ENCODE measurements at regions of chr20 and their contacts with region 1.

Region 1: DNA sequence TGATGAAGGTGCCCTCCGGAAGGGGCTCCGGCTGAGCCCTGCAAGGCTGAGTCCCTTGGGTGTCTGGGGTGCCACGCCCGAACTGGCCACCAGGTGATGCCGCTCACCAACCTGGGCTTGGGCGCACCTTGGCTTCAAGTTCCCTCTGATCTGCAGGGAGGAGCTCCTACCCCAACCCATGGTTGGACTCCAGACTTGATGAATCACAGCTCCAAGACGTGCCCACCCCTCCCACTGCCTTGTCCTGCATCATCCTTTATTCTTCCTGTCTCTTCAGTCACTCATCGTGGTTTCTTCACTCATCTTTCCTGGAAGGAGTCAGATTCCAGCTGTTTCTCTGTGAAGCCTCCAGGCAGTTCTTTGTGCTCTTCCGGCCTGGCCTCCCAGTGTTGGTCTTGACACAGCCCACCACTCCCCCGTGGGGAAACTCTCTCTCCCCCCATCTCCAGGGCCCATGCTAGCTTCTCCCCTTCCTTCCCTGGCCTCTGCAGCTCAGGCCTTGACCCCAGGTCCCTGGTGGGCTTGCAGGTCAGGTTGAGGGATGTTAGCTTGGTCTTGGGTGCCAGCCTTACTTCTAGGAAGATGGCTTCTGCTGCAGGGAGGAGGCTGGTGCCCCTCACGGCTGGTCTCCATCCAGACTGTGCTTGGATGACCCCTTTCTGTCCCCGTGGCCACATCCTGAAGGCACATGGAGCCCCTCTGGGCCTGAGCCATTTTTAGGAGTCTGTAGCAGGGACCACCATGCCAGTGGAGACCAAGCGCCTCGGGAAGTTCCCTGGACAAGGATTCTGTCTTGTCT is 2.6 kb upstream of the ZBP1 start:
- DNase-seq: peak; percentile 88
- H3K4me3 Mint-ChIP-seq: no peak overlapping the region
- H3K27ac Mint-ChIP-seq: no peak overlapping the region
- H3K4me1 Mint-ChIP-seq: peaks cover 71% of the 10 kb centered on the region
- H3K27me3 Mint-ChIP-seq: no peaks in the 10 kb centered on the region

Region 2: DNA sequence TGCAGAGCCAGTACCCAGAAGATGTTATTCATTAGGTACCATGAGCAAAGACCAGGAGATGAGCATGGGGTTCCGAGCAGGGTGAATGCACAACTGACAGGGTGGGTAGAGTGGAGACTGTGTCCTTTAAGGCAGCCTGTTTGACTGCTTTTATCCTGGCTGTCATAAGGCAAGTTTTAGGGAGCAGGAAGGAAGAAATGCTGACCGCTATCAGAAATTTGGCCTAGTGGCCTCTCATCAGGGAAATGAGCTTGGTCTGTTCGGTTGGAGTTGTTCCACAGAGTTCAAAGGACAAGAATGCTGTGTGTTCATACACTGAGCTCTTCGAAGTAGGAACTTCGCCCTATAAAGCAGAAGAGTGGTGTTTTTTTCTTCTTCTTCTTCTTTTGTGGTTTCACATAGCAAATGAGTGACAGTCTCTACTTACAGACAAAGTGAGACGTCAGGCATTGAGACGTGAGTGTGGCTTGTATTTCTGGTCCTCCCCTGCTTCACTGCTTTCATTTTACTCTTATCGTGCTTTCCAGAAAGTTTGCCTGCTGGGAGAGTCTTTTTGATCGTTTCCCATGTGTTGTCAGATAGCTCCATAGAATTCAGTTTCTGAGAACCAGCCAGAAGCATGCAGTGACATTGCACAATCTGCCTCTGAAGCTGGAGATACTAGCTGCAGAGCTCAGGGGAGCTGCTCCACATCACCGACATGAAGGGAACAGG is 1210.9 kb before region 1 on chr20 and contains the start of gene CASS4:
- CTCF ChIA-PET with region 1: no interaction called
- intact Hi-C with region 1: loop called (anchors 10 kb)
- DNase-seq: peak; percentile 63
- H3K4me3 Mint-ChIP-seq: peak within 1 kb of the TSS; percentile 89
- H3K27ac Mint-ChIP-seq: peak within 1 kb of the TSS; percentile 98
- H3K4me1 Mint-ChIP-seq: peaks cover 62% of the 10 kb centered on the region
- H3K27me3 Mint-ChIP-seq: no peaks in the 10 kb centered on the region
- total RNA-seq, gene CASS4: 5.1 to 5.2 TPM

Region 3: GRCh38 chr20:57089691-57090150 is 533.1 kb before region 1 on chr20:
- CTCF ChIA-PET with region 1: no interaction called
- intact Hi-C with region 1: no loop called
- DNase-seq: peak; percentile 82
- H3K4me3 Mint-ChIP-seq: no peak overlapping the region
- H3K27ac Mint-ChIP-seq: no peak overlapping the region
- H3K4me1 Mint-ChIP-seq: peaks cover 11% of the 10 kb centered on the region
- H3K27me3 Mint-ChIP-seq: peaks cover 9% of the 10 kb centered on the region

Region 4: DNA sequence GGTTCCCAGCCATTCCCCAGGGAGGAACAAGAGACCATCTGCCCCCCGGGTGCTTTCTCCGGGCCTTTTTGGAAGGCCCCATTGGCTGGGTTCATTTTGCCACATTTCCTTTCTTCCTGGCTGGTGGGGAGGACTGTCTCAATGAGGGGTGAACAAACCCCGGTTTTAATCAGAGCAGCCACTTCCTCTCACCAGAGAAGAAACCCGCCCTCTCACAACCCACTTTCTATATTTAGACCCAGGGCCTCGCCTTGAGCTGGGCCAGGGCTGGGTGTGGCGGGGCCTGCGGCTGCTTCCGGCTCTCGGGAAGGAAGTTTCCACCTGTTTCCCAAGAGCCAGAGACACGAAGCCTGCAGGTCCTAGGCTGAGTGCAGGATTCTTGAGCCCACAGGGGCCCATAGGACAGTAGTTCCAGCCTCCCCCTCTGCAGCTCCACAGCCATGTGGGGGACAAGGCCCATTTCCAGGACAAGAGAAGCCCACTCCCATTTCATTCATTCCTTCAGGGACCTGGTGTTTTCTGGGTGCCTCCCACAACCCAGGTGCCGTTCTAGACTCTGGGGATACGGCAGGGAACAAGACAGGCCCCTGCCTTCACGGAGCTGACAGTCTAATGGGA is 189.8 kb before region 1 on chr20:
- CTCF ChIA-PET with region 1: no interaction called
- intact Hi-C with region 1: loop called (anchors 2 kb)
- DNase-seq: peak; percentile 85
- H3K4me3 Mint-ChIP-seq: peak overlapping the region; percentile 18
- H3K27ac Mint-ChIP-seq: peak overlapping the region; percentile 87
- H3K4me1 Mint-ChIP-seq: peaks cover 58% of the 10 kb centered on the region
- H3K27me3 Mint-ChIP-seq: no peaks in the 10 kb centered on the region

Region 5: DNA sequence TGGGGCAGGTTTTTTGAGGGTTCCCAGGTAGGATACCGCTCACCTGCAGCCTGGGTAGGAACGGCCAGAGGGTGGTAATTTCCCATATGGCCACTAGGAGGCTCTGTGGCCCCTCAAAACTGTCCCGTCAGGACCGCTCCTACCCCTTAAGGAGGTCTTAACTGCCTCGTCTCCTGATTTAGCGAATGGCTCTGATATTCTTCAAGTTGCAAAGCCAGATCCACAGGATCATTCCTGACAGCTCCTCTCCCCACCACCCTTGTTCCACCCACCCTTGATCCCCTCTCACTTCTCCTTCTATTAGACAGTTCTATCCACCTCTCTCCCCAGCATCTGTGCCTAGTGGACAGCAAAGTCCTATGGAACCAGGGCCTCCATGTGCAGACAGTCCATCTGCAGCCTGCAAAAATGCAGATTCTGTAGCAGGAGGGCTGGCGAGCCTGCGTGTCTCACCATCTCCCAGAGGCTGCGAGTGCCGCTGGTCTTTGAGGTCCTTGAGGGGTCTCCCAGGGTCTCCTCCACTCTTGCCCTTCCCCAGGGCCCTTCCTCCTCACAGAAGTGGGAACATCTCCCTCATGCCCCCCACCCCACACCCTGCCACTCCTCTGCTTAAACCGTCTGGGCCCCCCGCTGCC is 31.7 kb after region 1 on chr20:
- CTCF ChIA-PET with region 1: interaction called, 10 read pairs
- intact Hi-C with region 1: loop called (anchors 1 kb)
- DNase-seq: peak; percentile 73
- H3K4me3 Mint-ChIP-seq: no peak overlapping the region
- H3K27ac Mint-ChIP-seq: no peak overlapping the region
- H3K4me1 Mint-ChIP-seq: peaks cover 18% of the 10 kb centered on the region
- H3K27me3 Mint-ChIP-seq: no peaks in the 10 kb centered on the region

Region 6: GRCh38 chr20:57672159-57672558 is 49.4 kb after region 1 on chr20:
- CTCF ChIA-PET with region 1: no interaction called
- intact Hi-C with region 1: no loop called
- DNase-seq: peak; percentile 15
- H3K4me3 Mint-ChIP-seq: no peak overlapping the region
- H3K27ac Mint-ChIP-seq: no peak overlapping the region
- H3K4me1 Mint-ChIP-seq: no peaks in the 10 kb centered on the region
- H3K27me3 Mint-ChIP-seq: no peaks in the 10 kb centered on the region

Region 7: GRCh38 chr20:57709931-57710799 is 87.4 kb after region 1 on chr20 and contains the start of gene PMEPA1:
- CTCF ChIA-PET with region 1: interaction called, 3 read pairs
- intact Hi-C with region 1: loop called (anchors 1 kb)
- DNase-seq: peak; percentile 91
- H3K4me3 Mint-ChIP-seq: peak within 1 kb of the TSS; percentile 79
- H3K27ac Mint-ChIP-seq: peak within 1 kb of the TSS; percentile 68
- H3K4me1 Mint-ChIP-seq: peaks cover 17% of the 10 kb centered on the region
- H3K27me3 Mint-ChIP-seq: peaks cover 6% of the 10 kb centered on the region
- total RNA-seq, gene PMEPA1: 2.0 to 2.2 TPM

Region 8: DNA sequence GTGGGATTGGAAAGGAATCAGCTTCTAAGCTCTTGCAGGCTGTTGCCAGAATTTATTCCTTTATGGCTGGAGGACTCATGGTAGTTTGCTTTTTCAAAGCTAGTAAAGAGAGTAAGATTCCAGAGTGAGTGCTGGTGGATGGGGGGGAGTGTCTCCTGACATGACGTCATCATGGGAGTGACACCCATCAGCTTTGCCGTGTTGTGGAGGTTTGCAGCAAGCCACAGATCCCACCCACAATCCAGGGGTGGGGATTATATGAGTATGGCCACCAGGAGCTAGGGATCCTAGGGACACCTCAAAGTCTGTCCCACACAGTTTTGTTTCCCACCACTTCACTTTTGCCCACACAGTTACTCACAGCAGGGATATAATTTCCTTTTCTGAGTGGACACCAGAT is 115.7 kb after region 1 on chr20:
- CTCF ChIA-PET with region 1: no interaction called
- intact Hi-C with region 1: no loop called
- DNase-seq: no peak
- H3K4me3 Mint-ChIP-seq: no peak overlapping the region
- H3K27ac Mint-ChIP-seq: no peak overlapping the region
- H3K4me1 Mint-ChIP-seq: no peaks in the 10 kb centered on the region
- H3K27me3 Mint-ChIP-seq: peaks cover 3% of the 10 kb centered on the region

Region 9: DNA sequence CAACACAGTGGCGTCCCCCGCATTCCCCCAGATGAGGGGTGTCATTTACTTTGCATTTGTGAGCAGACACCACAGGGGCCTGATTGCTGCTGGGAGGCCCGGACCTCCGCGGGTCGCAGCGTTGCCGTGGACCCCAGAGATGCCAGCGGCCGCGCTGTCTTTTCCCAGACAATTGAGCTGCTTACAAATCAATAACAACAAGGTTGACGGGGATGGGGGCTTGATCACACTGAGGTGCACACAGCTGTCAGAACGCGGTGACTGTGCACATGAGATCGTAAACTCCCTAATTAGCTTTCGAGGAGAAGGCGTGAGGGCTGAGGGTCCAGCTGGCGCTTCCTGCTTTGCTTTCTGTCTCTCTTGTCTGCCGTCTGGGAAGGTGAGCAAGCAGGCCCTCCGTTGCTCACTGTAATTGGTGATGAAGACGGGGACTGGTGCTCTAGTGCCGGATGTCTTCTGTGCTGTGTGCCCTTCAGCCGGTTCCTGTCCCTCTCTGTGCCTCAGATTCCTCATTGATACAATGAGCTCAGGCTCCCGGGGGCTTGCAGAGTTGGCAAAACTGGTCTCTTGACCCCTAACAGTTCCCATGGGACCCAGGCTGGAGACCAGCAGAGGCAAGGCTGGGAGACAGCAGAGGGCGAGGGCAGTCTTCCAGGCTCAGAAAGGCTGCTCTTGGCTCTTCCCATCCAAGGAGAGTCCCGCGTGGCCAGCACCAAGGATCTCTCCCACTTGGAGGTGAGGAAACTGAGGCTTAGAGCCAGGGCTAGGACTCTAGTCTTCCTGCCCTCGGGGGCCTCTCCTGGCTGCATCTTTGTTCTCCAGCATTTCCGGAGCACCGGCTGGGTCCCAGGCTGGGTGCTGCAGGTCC is 213.0 kb after region 1 on chr20:
- CTCF ChIA-PET with region 1: no interaction called
- intact Hi-C with region 1: no loop called
- DNase-seq: no peak
- H3K4me3 Mint-ChIP-seq: no peak overlapping the region
- H3K27ac Mint-ChIP-seq: no peak overlapping the region
- H3K4me1 Mint-ChIP-seq: no peaks in the 10 kb centered on the region
- H3K27me3 Mint-ChIP-seq: no peaks in the 10 kb centered on the region

Region 10: GRCh38 chr20:58087193-58087858 is 464.5 kb after region 1 on chr20:
- CTCF ChIA-PET with region 1: interaction called, 3 read pairs
- intact Hi-C with region 1: loop called (anchors 10 kb)
- DNase-seq: peak; percentile 45
- H3K4me3 Mint-ChIP-seq: no peak overlapping the region
- H3K27ac Mint-ChIP-seq: no peak overlapping the region
- H3K4me1 Mint-ChIP-seq: no peaks in the 10 kb centered on the region
- H3K27me3 Mint-ChIP-seq: no peaks in the 10 kb centered on the region

Region 11: GRCh38 chr20:58407966-58408557 is 785.3 kb after region 1 on chr20:
- CTCF ChIA-PET with region 1: interaction called, 3 read pairs
- intact Hi-C with region 1: loop called (anchors 10 kb)
- DNase-seq: peak; percentile 63
- H3K4me3 Mint-ChIP-seq: peak overlapping the region; percentile 7
- H3K27ac Mint-ChIP-seq: peak overlapping the region; percentile 81
- H3K4me1 Mint-ChIP-seq: peaks cover 30% of the 10 kb centered on the region
- H3K27me3 Mint-ChIP-seq: no peaks in the 10 kb centered on the region

Measured in activated naive CD4-positive, alpha-beta T cell treated with anti-CD3 and anti-CD28 coated beads for 36 hours (primary cell).